ENCODE measurements at regions of chr7 and their contacts with region 1.

Region 1: DNA sequence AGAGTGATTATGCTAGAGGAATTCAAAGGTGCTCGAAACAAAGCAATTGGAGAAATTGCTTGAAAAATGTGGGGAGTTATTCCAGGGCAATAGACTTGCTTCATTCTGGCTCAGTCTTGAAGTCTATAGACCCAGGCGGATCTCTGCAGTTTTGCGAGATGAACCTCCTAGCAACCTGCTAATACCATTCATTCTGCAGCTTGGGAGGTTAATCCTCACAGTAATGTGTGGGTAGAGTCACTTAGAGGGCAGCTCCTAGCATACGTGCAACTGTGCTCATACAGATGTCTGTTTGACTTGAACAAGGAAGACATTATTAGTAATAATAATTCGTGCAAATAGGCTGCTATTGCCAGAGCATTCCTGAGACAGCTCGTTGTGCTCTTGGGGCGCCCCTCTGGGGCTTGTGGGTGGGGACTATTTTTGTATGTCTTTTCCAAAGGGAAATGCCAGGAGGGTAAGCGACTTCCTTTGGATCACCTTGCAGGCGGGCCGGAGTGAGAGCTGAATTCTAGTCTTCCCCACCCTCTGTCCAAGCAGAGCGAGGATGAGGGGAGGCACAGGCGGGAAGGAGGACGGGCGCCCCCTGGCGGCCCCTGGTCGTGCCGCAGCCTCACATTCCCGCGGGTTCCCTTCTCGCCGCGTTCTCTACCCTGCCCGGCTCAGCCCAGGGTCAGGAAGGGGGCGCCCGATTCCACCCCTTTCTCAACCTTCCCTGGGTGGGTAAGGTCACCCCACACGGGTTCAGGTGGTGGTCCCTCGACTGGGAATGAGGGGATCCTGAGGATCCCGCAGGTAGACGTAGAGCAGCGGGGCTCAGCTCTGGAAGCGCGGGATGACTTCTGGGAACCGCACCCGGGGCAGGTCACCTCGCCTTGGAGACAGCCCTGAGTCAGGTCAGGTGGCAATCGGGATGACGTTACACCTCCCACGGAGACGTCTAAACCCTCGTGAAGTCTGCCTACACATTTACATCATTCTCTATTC is 241.5 kb downstream of the PHTF2 start:
- DNase-seq: peak; percentile 81
- ATAC-seq: peak; percentile 90
- H3K4me3 Mint-ChIP-seq: peak overlapping the region; percentile 40
- H3K27ac Mint-ChIP-seq: no peak overlapping the region
- H3K4me1 Mint-ChIP-seq: peaks cover 30% of the 10 kb centered on the region
- H3K27me3 Mint-ChIP-seq: no peaks in the 10 kb centered on the region; the same call in 1 of the 2 replicates
- CTCF ChIP-seq: peak; percentile 99

Region 2: GRCh38 chr7:77989981-77990566 is 50.0 kb before region 1 on chr7:
- CTCF ChIA-PET with region 1: interaction called, 26 read pairs
- POLR2A ChIA-PET with region 1: interaction called, 4 read pairs
- DNase-seq: peak; percentile 68
- ATAC-seq: peak; percentile 61
- H3K4me3 Mint-ChIP-seq: no peak overlapping the region
- H3K27ac Mint-ChIP-seq: no peak overlapping the region
- H3K4me1 Mint-ChIP-seq: peaks cover 21% of the 10 kb centered on the region
- H3K27me3 Mint-ChIP-seq: no peaks in the 10 kb centered on the region; the same call in 1 of the 2 replicates
- CTCF ChIP-seq: peak; percentile 46; the same call in 1 of the 2 replicates

Region 3: DNA sequence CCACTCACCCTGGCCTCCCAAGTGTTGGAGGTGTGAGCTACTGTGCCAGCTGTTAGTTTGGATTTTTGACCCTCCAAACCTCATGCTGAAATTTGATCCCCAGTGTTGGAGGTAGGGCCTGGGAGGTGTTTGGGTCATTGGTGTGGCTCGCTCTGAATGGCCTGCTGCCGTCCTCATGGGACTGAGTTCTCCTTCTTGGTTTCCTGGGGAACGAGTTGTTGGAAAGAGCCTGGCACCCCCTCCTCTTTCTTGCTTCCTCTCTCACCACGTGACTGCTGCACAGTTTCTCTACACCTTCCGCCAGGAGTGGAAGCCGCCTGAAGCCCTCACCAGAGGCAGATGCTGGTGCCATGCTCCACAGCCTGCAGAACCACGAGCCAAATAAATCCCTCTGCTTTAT is 12.0 kb after region 1 on chr7:
- CTCF ChIA-PET with region 1: interaction called, 66 read pairs
- POLR2A ChIA-PET with region 1: no interaction called
- DNase-seq: peak; percentile 67
- ATAC-seq: peak; percentile 99
- H3K4me3 Mint-ChIP-seq: 0 out of 2 replicates have a peak overlapping the region, but pooled peaks have one; percentile 31
- H3K27ac Mint-ChIP-seq: peak overlapping the region; percentile 98
- H3K4me1 Mint-ChIP-seq: peaks cover 35% of the 10 kb centered on the region
- H3K27me3 Mint-ChIP-seq: no peaks in the 10 kb centered on the region
- CTCF ChIP-seq: no peak

Region 4: GRCh38 chr7:78062214-78062613 is 22.1 kb after region 1 on chr7:
- CTCF ChIA-PET with region 1: interaction called, 12 read pairs
- POLR2A ChIA-PET with region 1: no interaction called
- DNase-seq: no peak
- ATAC-seq: no peak
- H3K4me3 Mint-ChIP-seq: no peak overlapping the region
- H3K27ac Mint-ChIP-seq: no peak overlapping the region
- H3K4me1 Mint-ChIP-seq: peaks cover 3% of the 10 kb centered on the region; the same call in 1 of the 2 replicates
- H3K27me3 Mint-ChIP-seq: no peaks in the 10 kb centered on the region; the same call in 1 of the 2 replicates
- CTCF ChIP-seq: no peak

Region 5: DNA sequence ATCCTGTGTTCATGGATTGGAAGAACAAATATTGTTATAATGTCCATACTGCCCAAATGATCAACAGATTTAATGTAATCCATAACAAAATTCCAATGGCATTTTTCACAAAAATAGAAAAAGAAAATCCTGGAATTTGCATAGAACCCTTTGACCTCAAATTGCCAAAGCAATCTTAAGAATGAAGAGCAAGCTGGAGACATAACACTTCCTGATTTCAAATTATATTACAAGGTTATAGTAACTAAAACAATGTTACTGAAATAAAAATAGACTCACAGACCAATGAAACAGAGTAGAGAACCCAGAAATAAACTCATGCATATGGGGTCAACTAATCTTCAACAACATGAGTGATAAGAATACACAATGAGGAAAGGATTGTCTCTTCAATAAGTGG is 61.0 kb after region 1 on chr7:
- CTCF ChIA-PET with region 1: no interaction called
- POLR2A ChIA-PET with region 1: no interaction called
- DNase-seq: no peak
- ATAC-seq: no peak
- H3K4me3 Mint-ChIP-seq: no peak overlapping the region
- H3K27ac Mint-ChIP-seq: no peak overlapping the region
- H3K4me1 Mint-ChIP-seq: no peaks in the 10 kb centered on the region
- H3K27me3 Mint-ChIP-seq: no peaks in the 10 kb centered on the region
- CTCF ChIP-seq: no peak